CD8-positive, alpha-beta memory T cell (primary cell): ENCODE measurements at regions of chr10 and their contacts with region 1.

Region 1: DNA sequence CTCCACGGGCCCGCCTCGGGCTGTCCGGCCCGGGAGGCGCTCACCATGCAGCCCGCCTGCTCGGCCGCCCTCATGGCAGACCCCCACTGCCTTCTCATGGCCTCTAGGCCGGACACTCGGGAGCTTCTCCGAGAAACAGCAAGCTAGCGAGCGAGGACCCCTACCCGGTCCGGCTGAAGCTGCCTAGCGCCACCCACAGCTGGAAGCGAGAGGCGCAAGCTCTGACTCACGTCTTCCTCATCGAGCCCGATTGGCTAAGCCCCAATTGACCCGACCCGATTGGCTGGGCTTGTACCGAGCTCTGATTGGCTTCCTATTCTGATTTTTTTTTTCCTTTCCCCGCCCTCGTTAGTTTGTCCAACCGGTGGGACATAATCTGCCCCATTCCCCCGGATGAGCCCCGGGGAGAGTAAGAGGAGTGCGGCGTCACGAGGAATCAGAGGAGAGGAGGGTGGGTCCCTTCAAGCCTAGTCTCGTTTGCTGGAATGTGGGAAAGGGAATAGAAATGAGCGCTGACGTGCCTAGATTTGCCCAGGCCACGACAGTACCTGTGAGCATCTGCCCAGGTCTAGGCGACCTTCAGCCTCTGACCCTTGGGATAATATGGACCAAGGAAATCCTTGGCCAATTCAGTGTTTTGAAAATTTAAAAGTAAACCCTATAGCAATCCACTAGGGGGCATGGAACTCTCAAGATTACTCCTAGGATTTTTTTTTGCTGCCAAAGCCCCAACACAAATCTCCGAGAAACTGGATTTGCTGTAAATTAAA is at the start of gene TYSND1:
- DNase-seq: peak; percentile 87 to 94 (median 91)
- H3K4me3 ChIP-seq: peak within 1 kb of the TSS; percentile 76
- H3K4me3 Mint-ChIP-seq: peak within 1 kb of the TSS; percentile 88 to 95 (median 91)
- H3K27ac ChIP-seq: peak within 1 kb of the TSS; percentile 91
- H3K27ac Mint-ChIP-seq: peak within 1 kb of the TSS; percentile 90 to 99 (median 95)
- H3K4me1 ChIP-seq: peaks cover 30% of the 10 kb centered on the region
- H3K4me1 Mint-ChIP-seq: peaks cover 31 to 63% (median 38%) of the 10 kb centered on the region in 3 donors
- H3K27me3 ChIP-seq: no peaks in the 10 kb centered on the region
- H3K27me3 Mint-ChIP-seq: no peaks in the 10 kb centered on the region
- total RNA-seq, gene TYSND1: 14.7 to 16.3 TPM

Region 2: DNA sequence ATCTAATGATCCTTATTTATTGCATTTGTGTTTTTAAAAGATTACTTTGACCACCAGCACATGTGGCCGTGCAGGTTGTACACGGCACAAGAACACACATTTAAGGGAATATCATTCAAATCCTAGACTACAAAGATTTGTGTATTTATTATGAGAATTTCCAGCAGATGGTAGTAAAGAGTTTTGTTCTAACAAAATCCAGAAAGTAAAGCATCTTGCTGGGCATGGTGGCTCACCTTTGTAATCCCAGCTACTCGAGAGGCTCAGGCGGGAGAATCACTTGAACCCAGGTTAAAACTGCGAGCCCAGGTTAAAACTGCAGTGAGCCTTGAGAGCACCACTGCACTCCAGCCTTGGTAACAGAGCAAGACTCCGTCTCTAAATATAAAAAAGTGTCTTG is 62.5 kb before region 1 on chr10:
- CTCF ChIA-PET with region 1: interaction called, 13 read pairs
- POLR2A ChIA-PET with region 1: no interaction called
- DNase-seq: peak in 1 of 5 donors; percentile 21
- H3K4me3 ChIP-seq: no peak overlapping the region
- H3K4me3 Mint-ChIP-seq: no peak overlapping the region
- H3K27ac ChIP-seq: no peak overlapping the region
- H3K27ac Mint-ChIP-seq: no peak overlapping the region
- H3K4me1 ChIP-seq: no peaks in the 10 kb centered on the region
- H3K4me1 Mint-ChIP-seq: no peaks in the 10 kb centered on the region
- H3K27me3 ChIP-seq: no peaks in the 10 kb centered on the region
- H3K27me3 Mint-ChIP-seq: peaks cover 0 to 3% of the 10 kb centered on the region in 2 donors

Region 3: DNA sequence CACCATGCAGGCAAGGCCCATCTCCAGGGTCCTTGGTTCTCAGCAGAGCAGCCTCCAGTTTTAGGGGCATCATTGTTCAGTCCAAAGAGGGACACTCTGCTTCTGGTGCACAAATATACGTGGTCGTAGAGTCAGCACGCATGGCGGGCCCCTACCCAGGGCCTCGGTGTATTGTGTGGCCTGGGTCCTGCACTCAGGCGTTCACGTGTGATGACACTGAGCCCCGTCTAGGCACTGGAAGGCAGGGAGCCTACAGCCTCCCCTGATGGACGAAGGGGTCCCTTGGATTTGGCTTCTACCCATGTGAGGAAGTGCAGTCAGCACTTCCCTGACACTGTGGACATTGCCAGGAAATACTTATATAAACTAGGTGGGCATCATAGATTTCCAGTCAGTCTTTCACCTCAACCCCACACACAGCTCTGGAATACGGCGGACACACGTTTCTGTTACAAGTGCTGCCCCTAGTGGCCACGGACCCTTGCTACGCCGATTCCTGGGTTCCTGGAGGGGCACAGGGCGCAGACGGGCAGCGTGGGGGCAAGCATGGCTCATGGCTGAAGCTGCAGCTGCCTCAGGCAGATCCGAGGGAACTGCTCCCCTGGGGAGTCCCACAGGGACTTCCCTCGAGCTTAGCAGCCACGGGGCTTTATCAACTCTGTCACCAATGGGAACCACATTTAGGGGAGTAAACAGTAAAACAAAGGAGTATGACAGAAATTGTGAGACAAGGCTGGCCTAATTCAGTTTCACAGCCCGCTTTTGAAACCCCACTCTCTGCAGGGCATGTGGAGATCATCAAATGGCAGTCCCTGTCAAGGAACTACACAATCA is 39.5 kb before region 1 on chr10:
- CTCF ChIA-PET with region 1: interaction called, 10 read pairs
- POLR2A ChIA-PET with region 1: no interaction called
- DNase-seq: no peak
- H3K4me3 ChIP-seq: no peak overlapping the region
- H3K4me3 Mint-ChIP-seq: no peak overlapping the region
- H3K27ac ChIP-seq: no peak overlapping the region
- H3K27ac Mint-ChIP-seq: peak overlapping the region in 4 of 8 donors; percentile 44 to 52 (median 48)
- H3K4me1 ChIP-seq: no peaks in the 10 kb centered on the region
- H3K4me1 Mint-ChIP-seq: peaks cover 0 to 26% (median 5%) of the 10 kb centered on the region in 3 donors
- H3K27me3 ChIP-seq: no peaks in the 10 kb centered on the region
- H3K27me3 Mint-ChIP-seq: no peaks in the 10 kb centered on the region

Region 4: DNA sequence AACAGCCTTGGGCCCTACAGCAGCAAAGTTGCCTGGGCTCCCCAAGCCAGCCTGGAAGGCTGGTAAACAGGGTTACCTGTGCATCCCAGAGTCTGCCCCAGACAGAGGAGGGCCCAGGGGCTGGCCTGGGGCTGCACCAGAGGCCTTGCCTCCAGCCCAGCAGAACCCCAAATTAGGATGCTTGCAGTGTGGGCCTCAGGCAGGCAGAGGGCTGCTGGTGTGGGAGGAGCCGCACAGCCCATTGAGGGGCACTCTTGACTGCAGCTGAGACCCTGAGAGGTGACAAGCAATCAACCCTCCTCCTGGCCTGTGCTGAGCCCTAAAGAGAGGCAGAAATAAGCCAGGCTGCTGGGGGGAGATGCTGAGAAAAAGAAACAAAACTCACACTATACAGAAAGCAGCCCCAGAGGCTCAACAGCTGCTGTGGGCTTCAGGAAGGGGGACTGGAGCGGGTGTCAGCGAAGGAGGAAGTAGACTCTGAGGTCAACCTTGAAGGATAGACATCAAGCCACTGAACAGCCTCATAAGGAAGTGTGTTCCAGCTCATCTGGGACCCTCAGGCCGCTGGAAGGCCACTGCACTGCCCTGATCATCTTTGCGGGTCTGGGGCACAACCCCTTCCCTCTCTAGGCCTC is 20.6 kb before region 1 on chr10:
- CTCF ChIA-PET with region 1: interaction called, 30 read pairs
- POLR2A ChIA-PET with region 1: no interaction called
- DNase-seq: peak in 1 of 5 donors; percentile 30
- H3K4me3 ChIP-seq: no peak overlapping the region
- H3K4me3 Mint-ChIP-seq: no peak overlapping the region
- H3K27ac ChIP-seq: no peak overlapping the region
- H3K27ac Mint-ChIP-seq: no peak overlapping the region
- H3K4me1 ChIP-seq: no peaks in the 10 kb centered on the region
- H3K4me1 Mint-ChIP-seq: peaks cover 4 to 9% (median 9%) of the 10 kb centered on the region in 3 donors
- H3K27me3 ChIP-seq: no peaks in the 10 kb centered on the region
- H3K27me3 Mint-ChIP-seq: no peaks in the 10 kb centered on the region

Region 5: GRCh38 chr10:70162892-70163201 is 16.2 kb after region 1 on chr10:
- CTCF ChIA-PET with region 1: interaction called, 58 read pairs
- POLR2A ChIA-PET with region 1: interaction called, 59 read pairs
- DNase-seq: peak; percentile 30 to 77 (median 47)
- H3K4me3 ChIP-seq: no peak overlapping the region
- H3K4me3 Mint-ChIP-seq: peak overlapping the region; percentile 57 to 79 (median 62)
- H3K27ac ChIP-seq: no peak overlapping the region
- H3K27ac Mint-ChIP-seq: peak overlapping the region; percentile 27 to 90 (median 79)
- H3K4me1 ChIP-seq: peaks cover 69% of the 10 kb centered on the region
- H3K4me1 Mint-ChIP-seq: peaks cover 68 to 91% (median 85%) of the 10 kb centered on the region in 3 donors
- H3K27me3 ChIP-seq: no peaks in the 10 kb centered on the region
- H3K27me3 Mint-ChIP-seq: no peaks in the 10 kb centered on the region

Region 6: GRCh38 chr10:70198696-70199466 is 52.2 kb after region 1 on chr10:
- CTCF ChIA-PET with region 1: interaction called, 11 read pairs
- POLR2A ChIA-PET with region 1: interaction called, 7 read pairs
- DNase-seq: peak in 1 of 5 donors; percentile 17
- H3K4me3 ChIP-seq: no peak overlapping the region
- H3K4me3 Mint-ChIP-seq: peak overlapping the region in 1 of 7 donors; percentile 27
- H3K27ac ChIP-seq: no peak overlapping the region
- H3K27ac Mint-ChIP-seq: peak overlapping the region in 3 of 8 donors; percentile 17 to 75 (median 61)
- H3K4me1 ChIP-seq: peaks cover 11% of the 10 kb centered on the region
- H3K4me1 Mint-ChIP-seq: peaks cover 29 to 36% (median 30%) of the 10 kb centered on the region in 3 donors
- H3K27me3 ChIP-seq: no peaks in the 10 kb centered on the region
- H3K27me3 Mint-ChIP-seq: no peaks in the 10 kb centered on the region

Region 7: DNA sequence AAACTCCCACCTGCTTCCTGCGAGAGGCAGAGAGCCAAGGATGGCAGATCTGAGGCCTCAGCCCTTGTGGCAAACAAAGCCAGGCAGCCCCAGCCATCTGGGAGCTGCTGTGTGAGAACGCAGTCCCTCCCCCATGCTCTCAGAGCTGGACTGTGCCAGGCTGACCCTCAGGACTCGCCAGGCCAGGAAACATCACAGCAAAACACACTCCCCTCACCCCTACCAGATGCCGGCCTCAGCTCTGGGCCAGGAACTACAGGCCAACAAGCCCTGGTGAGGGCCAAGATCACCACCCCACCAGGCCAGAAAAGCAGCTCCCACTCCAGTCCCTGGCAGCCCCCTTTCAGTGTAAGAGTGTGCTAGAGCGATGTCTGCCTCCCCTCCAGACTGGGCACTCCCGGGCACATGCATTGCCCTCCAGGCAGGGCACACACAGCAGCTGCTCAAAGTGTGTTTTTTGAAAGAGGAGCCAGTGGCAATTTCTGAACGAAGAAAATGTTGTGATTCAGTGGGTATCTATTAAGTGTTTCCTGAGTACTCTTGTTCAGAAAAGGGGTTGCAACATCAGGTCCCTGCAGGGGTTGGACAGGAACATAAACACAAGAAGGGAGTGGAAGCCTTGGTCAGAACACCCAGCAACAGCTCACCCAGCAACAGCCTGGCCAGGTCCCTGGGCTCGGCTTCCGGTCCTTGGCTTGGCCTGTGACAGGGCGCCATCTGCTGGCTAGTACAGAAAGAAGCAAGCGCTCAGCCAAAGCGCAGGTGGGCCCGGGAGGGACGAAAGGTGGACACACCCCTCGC is 217.5 kb after region 1 on chr10:
- CTCF ChIA-PET with region 1: interaction called, 23 read pairs
- POLR2A ChIA-PET with region 1: interaction called, 7 read pairs
- DNase-seq: peak; percentile 75 to 89 (median 76)
- H3K4me3 ChIP-seq: no peak overlapping the region
- H3K4me3 Mint-ChIP-seq: peak overlapping the region in 4 of 7 donors; percentile 32 to 59 (median 51)
- H3K27ac ChIP-seq: no peak overlapping the region
- H3K27ac Mint-ChIP-seq: peak overlapping the region in 4 of 8 donors; percentile 23 to 88 (median 60)
- H3K4me1 ChIP-seq: peaks cover 8% of the 10 kb centered on the region
- H3K4me1 Mint-ChIP-seq: peaks cover 8 to 11% (median 9%) of the 10 kb centered on the region in 3 donors
- H3K27me3 ChIP-seq: no peaks in the 10 kb centered on the region
- H3K27me3 Mint-ChIP-seq: no peaks in the 10 kb centered on the region